IMR-90 (cell line): ENCODE measurements at regions of chr15 and their contacts with region 1.

Region 1: DNA sequence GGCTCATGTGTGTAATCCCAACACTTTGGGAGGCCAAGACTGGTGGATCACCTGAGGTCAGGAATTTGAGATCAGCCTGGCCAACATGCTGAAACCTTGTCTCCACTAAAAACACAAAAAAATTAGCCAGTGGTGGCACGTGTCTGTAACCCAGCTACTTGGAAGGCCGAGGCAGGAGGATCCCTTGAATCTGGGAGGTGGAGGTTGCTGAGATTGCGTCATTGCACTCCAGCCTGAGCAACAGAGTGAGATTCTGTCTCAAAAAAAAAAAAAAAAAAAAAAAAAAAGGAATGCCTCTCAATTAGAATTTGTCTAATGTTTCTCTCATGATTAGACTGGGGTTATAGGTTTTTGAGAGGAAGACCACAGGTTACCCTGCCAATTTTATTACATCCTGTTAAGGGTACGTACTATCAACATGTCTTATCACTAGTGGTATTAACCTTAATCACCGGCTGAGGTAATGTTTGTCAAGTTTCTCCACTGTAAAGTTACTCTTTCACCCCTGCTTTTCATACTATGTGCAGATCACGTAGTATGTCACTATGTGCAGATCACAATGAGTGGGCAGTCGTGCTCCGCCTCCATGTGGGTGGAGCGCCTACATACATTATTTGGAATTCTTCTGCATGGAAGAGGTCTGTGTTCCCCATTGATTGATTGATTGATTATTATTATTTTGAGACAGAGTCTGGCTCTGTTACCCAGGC is 6.2 kb upstream of the RPAP1 start:
- DNase-seq: no peak
- ATAC-seq: no peak
- H3K4me3 ChIP-seq: no peak overlapping the region
- H3K27ac ChIP-seq: no peak overlapping the region
- H3K4me1 ChIP-seq: no peaks in the 10 kb centered on the region; the same call in 1 of the 2 replicates
- H3K27me3 ChIP-seq: no peaks in the 10 kb centered on the region
- CTCF ChIP-seq: no peak
- POLR2A ChIP-seq: no peak
- RAD21 ChIP-seq: no peak

Region 2: DNA sequence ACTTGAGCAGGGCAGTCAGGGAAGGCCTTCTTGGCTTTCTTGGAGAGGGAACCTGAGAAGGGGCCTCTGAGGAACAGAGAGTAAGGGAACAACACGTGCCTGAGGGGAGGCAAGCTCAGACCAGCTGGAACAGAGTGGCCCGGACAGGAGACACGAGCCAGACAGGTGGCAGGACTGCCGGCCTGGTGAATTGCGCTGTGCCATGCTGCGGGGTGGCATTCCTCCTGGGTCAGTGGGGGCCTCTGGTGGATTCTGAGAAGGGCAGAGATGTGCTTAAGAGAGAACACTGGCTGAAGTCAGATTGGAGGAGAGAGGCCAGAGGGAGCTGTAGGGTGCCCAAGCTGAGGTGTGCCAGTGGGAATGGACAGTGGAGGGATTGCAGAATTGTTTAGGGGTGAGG is 592.1 kb before region 1 on chr15:
- CTCF ChIA-PET with region 1: no interaction called
- POLR2A ChIA-PET with region 1: interaction called, 10 read pairs
- dilution Hi-C with region 1: no loop called
- in situ Hi-C with region 1: no loop called
- intact Hi-C with region 1: no loop called
- DNase-seq: no peak
- ATAC-seq: peak; percentile 2; the same call in 1 of the 2 replicates
- H3K4me3 ChIP-seq: no peak overlapping the region
- H3K27ac ChIP-seq: no peak overlapping the region
- H3K4me1 ChIP-seq: peaks cover 25% of the 10 kb centered on the region
- H3K27me3 ChIP-seq: no peaks in the 10 kb centered on the region
- CTCF ChIP-seq: no peak
- POLR2A ChIP-seq: no peak; the same call in 1 of the 2 replicates
- RAD21 ChIP-seq: no peak